IMR-90 (cell line): ENCODE measurements at regions of chr14 and their contacts with region 1.

Region 1: GRCh38 chr14:23665375-23666192 is 29.4 kb downstream of the DHRS2 start:
- DNase-seq: peak; percentile 51
- ATAC-seq: peak; percentile 89
- H3K4me3 ChIP-seq: no peak overlapping the region
- H3K27ac ChIP-seq: no peak overlapping the region
- H3K4me1 ChIP-seq: no peaks in the 10 kb centered on the region
- H3K27me3 ChIP-seq: peaks cover 4% of the 10 kb centered on the region; the same call in 1 of the 2 replicates
- CTCF ChIP-seq: peak; percentile 56
- POLR2A ChIP-seq: no peak
- RAD21 ChIP-seq: peak; percentile 52

Region 2: DNA sequence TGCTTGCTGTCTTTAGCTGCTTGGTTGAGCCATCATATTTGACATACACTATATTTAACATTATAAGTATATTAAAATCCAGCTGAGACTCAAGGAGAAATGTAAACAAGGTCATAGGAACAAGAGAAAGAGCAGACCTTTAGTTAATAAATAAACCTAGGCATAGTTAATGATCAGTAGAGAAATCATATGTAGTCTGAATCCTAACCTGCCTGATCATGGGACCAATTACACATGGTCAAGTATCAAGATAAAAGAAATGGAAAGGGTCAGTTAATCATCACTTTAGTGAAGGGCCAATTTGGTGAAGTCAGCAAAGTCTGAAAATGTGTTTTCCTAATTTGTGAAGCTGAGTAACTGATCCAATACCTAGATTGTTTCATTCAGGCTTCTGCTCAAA is 420.3 kb before region 1 on chr14:
- CTCF ChIA-PET with region 1: no interaction called
- POLR2A ChIA-PET with region 1: no interaction called
- dilution Hi-C with region 1: no loop called
- in situ Hi-C with region 1: no loop called
- intact Hi-C with region 1: no loop called
- DNase-seq: no peak
- ATAC-seq: no peak
- H3K4me3 ChIP-seq: no peak overlapping the region
- H3K27ac ChIP-seq: no peak overlapping the region
- H3K4me1 ChIP-seq: no peaks in the 10 kb centered on the region
- H3K27me3 ChIP-seq: peaks cover 6% of the 10 kb centered on the region
- CTCF ChIP-seq: no peak
- POLR2A ChIP-seq: no peak
- RAD21 ChIP-seq: no peak

Region 3: GRCh38 chr14:23776288-23776687 is 110.7 kb after region 1 on chr14:
- CTCF ChIA-PET with region 1: no interaction called
- POLR2A ChIA-PET with region 1: no interaction called
- dilution Hi-C with region 1: no loop called
- in situ Hi-C with region 1: no loop called
- intact Hi-C with region 1: no loop called
- DNase-seq: no peak
- ATAC-seq: no peak
- H3K4me3 ChIP-seq: no peak overlapping the region
- H3K27ac ChIP-seq: no peak overlapping the region
- H3K4me1 ChIP-seq: no peaks in the 10 kb centered on the region
- H3K27me3 ChIP-seq: peaks cover 2% of the 10 kb centered on the region
- CTCF ChIP-seq: no peak
- POLR2A ChIP-seq: no peak
- RAD21 ChIP-seq: no peak

Region 4: GRCh38 chr14:23910101-23910875 is 244.7 kb after region 1 on chr14:
- CTCF ChIA-PET with region 1: interaction called, 10 read pairs
- POLR2A ChIA-PET with region 1: no interaction called
- dilution Hi-C with region 1: no loop called
- in situ Hi-C with region 1: no loop called
- intact Hi-C with region 1: loop called (anchors 1 kb)
- DNase-seq: peak; percentile 48
- ATAC-seq: peak; percentile 98
- H3K4me3 ChIP-seq: no peak overlapping the region
- H3K27ac ChIP-seq: no peak overlapping the region
- H3K4me1 ChIP-seq: no peaks in the 10 kb centered on the region
- H3K27me3 ChIP-seq: peaks cover 3% of the 10 kb centered on the region; the same call in 1 of the 2 replicates
- CTCF ChIP-seq: peak; percentile 81
- POLR2A ChIP-seq: no peak
- RAD21 ChIP-seq: peak; percentile 87